ENCODE measurements at regions of chr2 and their contacts with region 1.

Region 1: GRCh38 chr2:136645236-136645828 is 120.0 kb upstream of the THSD7B start:
- DNase-seq: no peak
- ATAC-seq: peak; percentile 63

Region 2: DNA sequence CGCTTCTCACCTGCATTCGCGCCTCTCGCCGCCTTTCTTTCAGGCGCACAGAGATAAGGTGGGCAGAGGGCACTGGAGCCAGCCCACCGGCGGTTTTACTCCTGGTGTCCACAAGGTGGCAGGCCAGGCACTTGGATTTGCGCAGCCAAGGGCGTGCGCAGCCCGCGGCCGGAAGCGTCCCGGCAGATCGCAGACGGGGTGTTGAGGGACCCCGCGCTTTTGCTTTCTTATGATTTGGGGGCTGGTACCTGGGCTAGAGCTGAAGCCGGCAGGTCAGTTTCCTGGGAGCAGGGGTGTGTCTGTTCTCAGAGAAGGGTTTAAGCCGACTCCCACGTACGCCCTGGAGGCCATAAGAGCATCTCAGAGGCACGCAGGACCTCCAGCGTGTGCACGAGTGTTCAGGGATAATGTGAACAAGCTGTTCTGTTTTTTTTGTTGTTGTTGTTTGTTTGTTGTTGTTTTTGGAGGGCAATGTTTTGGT is 221.8 kb before region 1 on chr2:
- intact Hi-C with region 1: loop called (anchors 10 kb)
- DNase-seq: peak; percentile 76
- ATAC-seq: peak; percentile 97

Region 3: DNA sequence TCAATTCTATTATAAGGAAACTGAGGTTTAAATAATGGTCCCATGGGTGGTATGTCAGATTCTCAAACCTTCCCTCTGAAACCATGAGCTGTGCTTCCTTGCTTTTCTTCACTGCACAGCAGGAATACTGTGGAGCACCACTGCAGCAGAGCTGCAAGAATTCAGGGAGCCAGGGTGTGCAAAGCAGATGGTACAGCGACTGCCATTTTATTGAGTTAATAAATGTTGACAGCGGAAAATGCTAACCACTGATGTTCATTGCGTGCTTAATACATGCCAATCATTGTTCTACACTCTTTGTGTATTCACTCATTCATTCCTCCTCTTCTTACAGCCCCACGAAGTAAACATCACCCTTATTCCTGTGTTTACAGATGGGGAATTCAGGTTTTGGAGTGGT is 32.2 kb before region 1 on chr2:
- intact Hi-C with region 1: no loop called
- DNase-seq: no peak
- ATAC-seq: no peak

Region 4: DNA sequence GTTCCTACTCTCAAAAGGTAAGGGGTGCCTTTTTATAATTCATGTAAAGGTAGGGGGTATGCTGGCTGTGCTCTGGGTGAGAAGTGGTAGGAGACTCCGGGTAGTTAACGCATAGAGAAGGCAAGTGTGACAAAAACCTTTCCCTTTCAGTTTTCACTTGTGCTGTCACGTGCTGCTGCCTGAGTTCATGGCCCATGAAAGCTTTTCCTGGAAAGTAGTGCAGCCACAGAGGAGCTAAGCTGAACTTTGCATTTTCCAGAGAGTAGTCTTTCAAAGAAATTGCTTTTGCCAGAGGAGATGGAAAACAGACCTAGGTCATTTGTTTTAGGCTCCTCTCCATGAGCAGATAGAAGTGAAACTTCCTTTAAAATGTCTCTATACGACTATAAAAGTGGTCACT is 164.7 kb after region 1 on chr2:
- intact Hi-C with region 1: no loop called
- DNase-seq: no peak
- ATAC-seq: no peak

Measured in left ventricle myocardium superior (tissue), 1 donor.